ENCODE measurements at regions of chr18 and their contacts with region 1.

Region 1: GRCh38 chr18:14026199-14026598 is 106.0 kb downstream of the ZNF519 start:
- DNase-seq: no peak
- ATAC-seq: no peak
- H3K4me3 ChIP-seq: no peak overlapping the region
- H3K27ac ChIP-seq: no peak overlapping the region
- H3K4me1 ChIP-seq: no peaks in the 10 kb centered on the region
- H3K27me3 ChIP-seq: no peaks in the 10 kb centered on the region
- CTCF ChIP-seq: no peak

Region 2: DNA sequence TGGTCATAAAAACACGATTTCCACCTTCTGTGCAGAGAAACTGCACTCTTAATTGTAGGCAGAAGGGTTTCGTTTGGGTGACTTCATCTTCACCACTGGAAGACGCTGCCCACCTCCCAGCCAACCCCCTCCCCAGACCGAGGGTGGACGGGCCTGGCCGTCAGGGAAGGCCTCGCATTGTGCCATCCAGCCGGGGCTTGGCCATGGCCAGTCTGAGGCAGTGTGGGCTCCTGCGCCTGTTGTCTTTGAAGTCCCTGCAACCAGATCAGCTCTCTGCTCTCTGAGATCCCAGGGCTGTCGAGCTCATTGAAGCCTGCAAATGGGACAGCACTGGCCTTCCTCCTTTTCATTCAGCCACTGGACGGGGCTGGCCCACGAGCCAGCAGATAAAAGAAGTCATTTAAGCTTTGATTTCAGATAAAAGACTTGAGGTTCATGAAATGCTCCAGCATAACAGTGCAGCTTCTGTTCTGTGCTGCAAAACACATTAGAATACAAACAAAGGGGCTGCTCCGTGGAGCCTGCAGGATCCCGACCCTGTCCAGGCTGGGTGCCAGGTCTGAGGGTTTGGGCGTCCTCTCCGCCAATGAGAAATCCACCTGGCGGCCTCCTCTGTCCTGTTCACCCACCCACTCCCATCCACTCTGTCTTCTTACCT is 554.1 kb before region 1 on chr18:
- intact Hi-C with region 1: no loop called
- DNase-seq: no peak
- ATAC-seq: no peak
- H3K4me3 ChIP-seq: no peak overlapping the region
- H3K27ac ChIP-seq: peak overlapping the region in 1 of 2 donors; percentile 60
- H3K4me1 ChIP-seq: peaks cover 0 to 27% of the 10 kb centered on the region in 2 donors
- H3K27me3 ChIP-seq: no peaks in the 10 kb centered on the region
- CTCF ChIP-seq: no peak

Region 3: DNA sequence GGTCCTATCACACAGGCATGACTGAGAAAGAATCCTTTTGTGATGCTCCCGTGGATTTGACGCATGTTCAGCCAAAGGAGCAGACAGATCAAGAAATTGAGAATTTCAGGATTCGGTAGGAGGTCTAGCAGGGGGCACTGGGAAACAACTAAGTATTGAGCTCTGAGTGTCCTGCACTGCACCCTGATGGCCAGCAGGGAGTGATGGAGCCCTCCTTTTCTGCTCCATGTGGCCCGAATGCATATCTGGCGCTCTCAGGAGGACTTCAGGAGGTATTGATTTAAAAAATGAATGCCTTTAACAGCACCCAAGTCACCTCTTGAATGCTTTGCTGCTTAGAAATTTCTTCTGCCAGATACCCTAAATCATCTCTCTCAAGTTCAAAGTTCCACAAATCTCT is 48.0 kb after region 1 on chr18:
- intact Hi-C with region 1: loop called in 1 of 2 experiments (anchors 10 kb)
- DNase-seq: no peak
- ATAC-seq: no peak
- H3K4me3 ChIP-seq: no peak overlapping the region
- H3K27ac ChIP-seq: no peak overlapping the region
- H3K4me1 ChIP-seq: no peaks in the 10 kb centered on the region
- H3K27me3 ChIP-seq: no peaks in the 10 kb centered on the region
- CTCF ChIP-seq: no peak

Measured in left lung (tissue), 14 donors.